Posterior vena cava (tissue), 2 donors: ENCODE measurements at regions of chr19 and their contacts with region 1.

Region 1: DNA sequence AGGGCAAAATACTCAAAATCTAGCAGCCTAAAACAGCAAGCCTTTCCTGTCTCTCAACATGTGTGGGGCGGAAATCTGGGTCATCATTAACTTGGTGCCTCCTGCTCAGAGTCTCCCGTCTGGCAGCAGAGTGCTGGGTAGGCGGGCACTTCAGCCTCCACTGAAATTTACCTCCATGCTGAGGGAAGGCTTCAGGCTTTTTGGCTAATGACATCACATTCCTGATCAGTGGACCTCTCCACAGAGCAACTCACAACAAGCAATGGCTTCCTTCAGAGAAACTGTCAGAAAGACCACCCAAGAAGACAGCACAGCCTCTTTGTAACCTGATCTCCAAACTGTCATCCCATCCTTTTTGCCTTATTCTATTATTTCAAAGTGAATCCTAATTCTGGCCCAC is 1109.0 kb downstream of the UQCRFS1 start:
- DNase-seq: no peak

Region 2: GRCh38 chr19:28009696-28010095 is 94.2 kb before region 1 on chr19:
- intact Hi-C with region 1: no loop called
- DNase-seq: no peak

Region 3: GRCh38 chr19:28169168-28169887 is 65.4 kb after region 1 on chr19:
- intact Hi-C with region 1: loop called in 1 of 2 experiments (anchors 2 kb)
- DNase-seq: no peak